ENCODE measurements at regions of chr1 and their contacts with region 1.

Region 1: DNA sequence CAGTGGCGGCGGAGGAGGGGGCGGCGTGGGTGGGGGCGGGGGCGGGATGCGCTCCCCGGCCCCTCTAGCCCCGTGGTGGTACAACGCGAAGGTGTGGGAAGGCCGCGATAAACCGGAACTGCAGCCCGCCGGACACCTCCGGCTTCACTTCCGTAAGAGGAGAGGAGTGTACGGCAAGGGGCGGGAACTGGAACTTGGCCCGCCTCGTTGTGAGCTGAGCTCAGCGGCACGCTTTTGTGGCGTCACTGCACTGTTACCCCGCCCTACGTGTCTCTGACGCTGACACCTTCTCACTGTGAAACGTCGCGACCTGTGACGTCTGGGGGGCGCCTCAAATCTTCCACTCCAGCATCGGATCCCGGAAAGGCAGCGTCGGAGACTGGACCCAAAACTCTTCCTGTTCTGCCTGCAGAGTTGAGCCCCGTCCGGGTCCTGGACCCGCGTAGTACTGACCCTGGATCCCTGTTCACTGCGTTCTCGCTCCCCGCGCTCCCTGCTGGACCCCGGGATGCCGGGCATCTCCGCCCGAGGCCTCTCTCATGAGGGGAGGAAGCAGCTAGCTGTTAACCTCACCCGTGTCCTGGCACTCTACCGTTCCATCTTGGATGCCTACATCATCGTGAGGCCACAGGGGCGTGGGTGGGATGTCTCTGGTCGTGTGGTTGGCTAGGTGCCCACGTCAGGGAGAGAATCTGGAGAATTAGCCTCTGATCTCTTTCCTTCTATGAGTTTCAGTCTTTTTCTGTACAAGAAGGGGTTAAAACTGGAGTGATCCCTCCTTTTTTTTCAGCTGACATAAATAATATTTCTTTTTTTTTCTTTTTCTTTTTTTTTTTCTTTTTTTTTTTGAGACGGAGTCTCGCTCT is at the start of gene ISG20L2:
- DNase-seq: peak; percentile 84
- H3K4me3 ChIP-seq: peak within 1 kb of the TSS; percentile 99
- CTCF ChIP-seq: no peak

Region 2: DNA sequence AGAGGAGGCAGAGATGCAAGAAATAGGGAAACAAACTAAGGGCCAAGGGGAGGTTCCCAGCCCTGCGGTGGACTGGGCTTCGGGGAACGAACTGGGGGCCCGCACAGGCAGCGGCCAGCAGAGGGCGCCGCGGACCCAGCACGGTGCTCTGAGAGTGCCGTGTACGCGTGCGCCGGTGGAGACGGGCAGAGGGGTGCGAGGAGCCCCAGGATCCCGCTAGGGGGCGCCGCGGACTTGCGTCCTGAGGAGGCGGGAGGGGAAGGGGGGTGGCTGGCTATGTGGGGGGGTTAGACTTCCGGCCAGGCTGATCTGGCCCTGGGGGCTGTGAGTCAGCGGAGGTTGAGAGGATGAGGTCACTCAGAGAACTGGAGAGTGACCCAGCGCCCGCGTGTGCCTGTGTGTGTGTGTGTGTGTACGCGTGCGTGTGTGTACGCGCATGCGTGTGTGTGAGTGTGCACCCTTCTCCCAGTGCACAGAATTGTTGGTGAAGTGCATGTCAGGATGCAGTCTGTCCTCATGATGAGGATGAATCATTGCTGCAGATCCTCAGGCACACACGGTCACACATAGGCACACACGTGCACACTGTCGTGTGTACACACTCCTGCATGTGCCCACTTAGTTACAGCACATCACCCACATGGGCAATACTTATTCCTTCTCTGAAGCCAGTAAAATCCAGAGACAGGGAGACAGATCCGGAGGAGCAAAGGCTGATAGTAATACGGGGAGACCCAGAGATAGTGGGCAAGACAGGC is 68.7 kb before region 1 on chr1:
- CTCF ChIA-PET with region 1: interaction called, 230 read pairs
- POLR2A ChIA-PET with region 1: interaction called, 3 read pairs
- DNase-seq: peak; percentile 77
- H3K4me3 ChIP-seq: no peak overlapping the region
- CTCF ChIP-seq: peak; percentile 100

Region 3: DNA sequence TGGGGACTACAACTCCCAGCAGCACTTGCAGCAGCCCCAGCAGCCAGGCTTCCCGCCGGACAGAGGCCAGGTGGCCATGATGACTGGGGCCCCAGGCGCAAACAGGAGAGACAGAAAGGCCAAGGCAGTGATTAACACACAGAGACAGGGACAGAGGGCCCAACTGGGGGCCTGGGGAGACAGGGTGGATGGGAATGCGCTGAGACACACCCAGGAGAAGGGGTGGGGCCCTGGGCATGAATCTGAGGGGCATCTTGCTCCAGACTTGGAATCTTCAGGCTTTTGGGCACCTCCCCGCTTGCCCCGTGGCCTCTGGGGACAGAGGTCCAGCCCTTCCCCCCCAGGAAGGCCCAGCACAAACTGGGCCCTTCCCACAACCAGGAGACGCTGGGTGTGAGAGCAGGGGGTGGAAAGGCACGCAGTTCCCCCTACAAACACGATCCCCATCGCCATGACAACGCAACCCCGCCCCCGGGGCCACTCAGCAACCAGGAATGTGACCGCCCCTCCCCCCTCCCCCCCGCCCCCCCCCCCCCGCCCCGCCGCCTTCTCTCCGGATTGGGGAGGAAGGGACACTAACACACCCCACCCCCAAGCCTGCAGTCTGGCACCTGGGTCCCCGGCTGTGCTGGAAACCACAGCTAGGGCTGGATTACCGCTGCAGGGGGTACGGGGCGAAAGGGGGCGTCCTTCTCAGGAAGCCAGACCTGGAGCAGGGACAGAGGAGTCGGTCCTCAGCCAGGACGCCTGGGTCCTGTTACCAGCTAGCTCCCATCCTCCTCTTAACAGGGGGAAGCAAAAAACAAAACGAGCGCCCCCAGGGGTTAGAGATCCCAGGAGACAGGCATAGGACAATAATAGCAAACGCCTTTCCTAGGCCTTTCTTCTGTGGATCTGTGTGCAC is 18.1 kb after region 1 on chr1:
- CTCF ChIA-PET with region 1: interaction called, 36 read pairs
- POLR2A ChIA-PET with region 1: interaction called, 18 read pairs
- DNase-seq: no peak
- H3K4me3 ChIP-seq: peak overlapping the region; percentile 61
- CTCF ChIP-seq: peak; percentile 5

Region 4: GRCh38 chr1:156773607-156774006 is 44.8 kb after region 1 on chr1:
- CTCF ChIA-PET with region 1: interaction called, 69 read pairs
- POLR2A ChIA-PET with region 1: interaction called, 4 read pairs
- DNase-seq: no peak
- H3K4me3 ChIP-seq: no peak overlapping the region
- CTCF ChIP-seq: no peak

Region 5: GRCh38 chr1:156838981-156839410 is 110.2 kb after region 1 on chr1:
- CTCF ChIA-PET with region 1: interaction called, 14 read pairs
- POLR2A ChIA-PET with region 1: no interaction called
- DNase-seq: no peak
- H3K4me3 ChIP-seq: no peak overlapping the region
- CTCF ChIP-seq: peak; percentile 85

Region 6: DNA sequence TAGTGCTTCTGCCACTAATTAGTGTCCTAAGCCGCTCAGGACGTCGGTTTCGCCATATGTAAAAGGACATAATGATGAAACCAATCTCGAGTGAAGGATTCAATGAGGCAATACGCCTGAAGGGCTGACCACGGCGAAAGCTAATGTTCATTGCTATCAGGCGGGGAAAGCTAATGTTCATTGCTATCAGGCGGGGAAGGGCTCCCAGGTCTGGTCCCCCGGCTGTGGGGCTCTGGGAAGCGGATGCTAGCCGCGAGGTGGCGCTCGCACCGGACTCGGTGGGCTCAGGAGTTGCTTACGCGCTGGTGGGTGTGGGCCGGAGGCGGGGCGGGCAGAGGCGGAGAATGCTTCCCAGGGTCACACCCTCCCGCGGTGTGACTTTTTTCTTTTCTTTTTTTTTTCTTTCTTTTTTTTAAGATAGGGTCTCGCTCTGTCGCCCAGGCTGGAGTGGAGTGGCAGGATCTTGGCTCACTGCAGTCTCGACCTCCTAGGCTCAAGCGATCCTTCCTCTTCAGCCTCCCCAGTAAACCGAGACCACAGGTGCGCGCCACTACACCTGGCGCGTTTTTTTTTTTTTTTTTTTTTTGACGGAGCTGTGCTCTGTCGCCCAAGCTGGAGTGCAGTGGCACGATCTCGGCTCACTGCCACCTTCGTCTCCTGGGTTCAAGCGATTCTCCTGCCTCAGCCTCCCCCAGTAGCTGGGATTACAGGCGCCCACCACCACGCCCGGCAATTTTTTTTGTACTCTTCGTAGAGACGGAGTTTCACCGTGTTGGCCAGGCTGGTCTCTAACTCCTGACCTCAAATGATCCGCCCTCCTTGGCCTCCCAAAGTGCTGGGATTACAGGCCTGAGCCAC is 163.6 kb after region 1 on chr1:
- CTCF ChIA-PET with region 1: interaction called, 226 read pairs
- POLR2A ChIA-PET with region 1: interaction called, 3 read pairs
- DNase-seq: no peak
- H3K4me3 ChIP-seq: peak overlapping the region; percentile 30
- CTCF ChIP-seq: peak; percentile 97

Region 7: DNA sequence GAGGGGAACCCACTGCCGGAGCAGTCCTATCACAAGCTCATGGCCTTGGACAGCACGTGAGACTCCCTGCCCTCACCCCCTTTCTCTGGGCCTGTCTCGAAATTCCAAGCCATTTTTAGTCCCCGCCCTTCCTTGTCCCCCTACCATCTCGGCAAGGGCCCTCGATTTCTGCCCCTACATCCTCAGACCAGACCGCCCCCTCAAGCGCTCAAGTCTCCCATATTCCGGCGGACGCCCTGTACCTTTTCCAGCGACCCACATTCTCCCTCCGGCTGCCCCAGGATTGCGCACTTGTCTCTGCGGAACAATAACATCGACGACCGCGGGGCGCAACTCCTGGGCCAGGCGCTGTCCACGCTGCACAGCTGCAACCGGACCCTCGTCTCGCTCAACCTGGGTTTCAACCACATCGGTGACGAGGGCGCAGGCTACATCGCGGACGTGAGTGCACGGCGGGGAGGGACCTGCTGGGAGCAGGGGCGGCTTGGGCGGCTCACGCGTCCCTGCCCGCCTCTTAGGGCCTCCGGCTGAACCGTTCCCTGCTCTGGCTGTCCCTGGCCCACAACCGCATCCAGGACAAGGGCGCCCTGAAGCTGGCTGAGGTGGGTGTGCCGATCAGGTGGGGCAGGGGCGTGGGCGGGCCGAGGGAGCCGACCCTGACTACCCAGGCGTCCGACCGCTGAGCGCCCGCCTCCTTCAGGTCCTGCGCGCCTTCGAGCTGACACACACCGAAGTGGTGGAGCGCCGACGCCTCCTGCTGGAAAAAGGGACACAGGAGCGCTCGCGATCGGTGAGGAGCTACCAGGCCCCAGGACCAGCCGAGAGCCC is 198.6 kb after region 1 on chr1:
- CTCF ChIA-PET with region 1: interaction called, 78 read pairs
- POLR2A ChIA-PET with region 1: interaction called, 3 read pairs
- DNase-seq: no peak
- H3K4me3 ChIP-seq: peak overlapping the region; percentile 55
- CTCF ChIP-seq: peak; percentile 94

Measured in AG04449 (cell line).